Left ventricle myocardium inferior (tissue), 1 donor: ENCODE measurements at regions of chr11 and their contacts with region 1.

Region 1: DNA sequence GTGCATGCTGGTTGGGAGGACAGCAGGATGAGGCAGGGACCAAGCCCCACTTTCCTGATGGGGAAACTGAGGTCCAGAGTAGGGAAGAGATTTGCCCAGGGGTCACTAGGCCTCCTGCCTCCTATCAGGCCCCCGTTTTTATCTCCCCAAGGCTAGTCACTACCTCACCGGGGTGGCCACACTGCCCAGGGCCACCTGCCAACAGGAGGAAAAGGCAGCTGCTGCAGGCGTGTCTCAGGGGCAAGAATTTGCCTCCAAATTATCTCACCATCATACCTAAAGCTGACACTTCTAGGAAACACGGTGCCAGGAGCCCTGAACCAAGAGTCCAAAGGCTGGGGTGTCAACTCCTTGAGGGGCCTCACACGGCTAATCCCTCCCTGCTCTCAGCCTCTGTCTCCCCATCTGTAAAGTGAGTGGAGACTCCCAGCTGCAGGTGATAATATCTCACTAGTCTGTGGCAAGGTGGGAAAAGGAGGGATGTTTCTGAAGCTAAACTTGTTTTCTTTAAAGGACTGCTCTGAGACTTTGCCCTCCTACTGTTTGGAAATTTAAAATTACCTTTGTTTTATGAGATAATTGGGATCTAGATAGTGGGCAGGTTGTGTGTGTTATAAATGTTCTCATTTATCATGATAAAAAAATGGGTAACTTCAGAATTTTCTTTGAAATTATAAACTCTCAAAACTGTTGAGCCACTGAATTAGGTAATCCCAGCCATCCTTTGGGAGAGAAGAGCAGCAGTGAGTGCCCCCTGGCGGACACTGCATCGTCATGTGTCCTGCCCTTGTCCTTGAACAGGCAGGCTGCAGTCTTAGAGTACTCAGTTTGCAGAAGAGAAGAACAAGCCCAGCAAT is 60.0 kb downstream of the MYO7A start:
- DNase-seq: peak; percentile 83
- H3K4me3 ChIP-seq: no peak overlapping the region
- H3K27ac ChIP-seq: no peak overlapping the region
- H3K4me1 ChIP-seq: no peaks in the 10 kb centered on the region
- H3K27me3 ChIP-seq: no peaks in the 10 kb centered on the region
- CTCF ChIP-seq: peak; percentile 90

Region 2: GRCh38 chr11:77047007-77047927 is 140.7 kb before region 1 on chr11:
- intact Hi-C with region 1: loop called (anchors 5 kb)
- DNase-seq: peak; percentile 36
- H3K4me3 ChIP-seq: peak overlapping the region; percentile 56
- H3K27ac ChIP-seq: no peak overlapping the region
- H3K4me1 ChIP-seq: peaks cover 13% of the 10 kb centered on the region
- H3K27me3 ChIP-seq: peaks cover 40% of the 10 kb centered on the region
- CTCF ChIP-seq: peak; percentile 74

Region 3: GRCh38 chr11:77127232-77127911 is 60.6 kb before region 1 on chr11:
- intact Hi-C with region 1: loop called (anchors 5 kb)
- DNase-seq: peak; percentile 51
- H3K4me3 ChIP-seq: peak overlapping the region; percentile 64
- H3K27ac ChIP-seq: peak overlapping the region; percentile 57
- H3K4me1 ChIP-seq: peaks cover 47% of the 10 kb centered on the region
- H3K27me3 ChIP-seq: peaks cover 13% of the 10 kb centered on the region
- CTCF ChIP-seq: peak; percentile 97